GM10248 (cell line): ENCODE measurements at regions of chr3 and their contacts with region 1.

Region 1: DNA sequence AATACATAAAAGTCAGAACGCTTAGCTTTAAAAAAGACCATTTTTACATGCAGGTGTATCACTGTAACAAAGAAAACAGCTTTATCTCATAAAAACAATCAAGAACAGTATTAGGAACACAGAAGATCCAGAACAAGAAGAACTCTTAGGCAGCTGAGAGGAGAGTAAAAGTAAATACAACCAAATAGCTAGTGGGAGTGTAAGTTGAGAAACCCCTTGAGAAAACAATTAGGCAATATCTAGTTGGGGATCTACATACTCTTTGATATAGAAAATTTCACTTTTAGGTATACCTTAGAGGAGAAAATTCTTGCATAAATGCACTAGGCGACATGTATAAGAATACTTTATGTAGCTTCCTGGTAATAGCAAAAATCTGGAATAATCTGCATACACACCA is 7.5 kb downstream of the TMF1 start:
- DNase-seq: no peak
- CTCF ChIP-seq: no peak

Region 2: GRCh38 chr3:68793759-68794701 is 250.6 kb before region 1 on chr3:
- CTCF ChIA-PET with region 1: no interaction called
- POLR2A ChIA-PET with region 1: no interaction called
- DNase-seq: no peak
- CTCF ChIP-seq: no peak

Region 3: DNA sequence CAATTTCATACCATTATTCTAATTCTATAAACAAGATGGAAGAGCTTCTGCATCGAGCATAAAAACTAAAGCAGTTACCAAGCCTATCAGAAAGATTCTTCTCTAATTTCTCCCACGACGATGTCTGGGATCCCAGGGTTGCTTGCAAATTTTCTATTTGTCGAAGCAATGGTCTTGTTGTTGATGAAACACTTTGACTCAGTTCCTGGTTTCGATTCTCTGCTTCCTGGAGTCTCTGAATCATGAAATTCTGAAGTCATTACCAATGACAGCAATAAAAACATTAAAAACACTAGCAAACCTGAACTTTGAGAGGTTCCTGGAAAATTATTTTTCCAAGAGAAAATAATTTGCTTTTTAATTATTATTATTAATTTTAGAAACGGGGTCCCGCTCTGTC is 11.1 kb before region 1 on chr3:
- CTCF ChIA-PET with region 1: interaction called, 10 read pairs
- POLR2A ChIA-PET with region 1: no interaction called
- DNase-seq: no peak
- CTCF ChIP-seq: no peak